Activated T-helper 1 cell treated with anti-CD3 and anti-CD28 coated beads, Interleukin-12 subunit alpha, Interleukin-12 subunit beta, Interleukin-2, Interleukin-4 antibody, amounts not matched to agents 30 ng/mL and 10 ng/mL and 1 ng/mL, durations not matched to agents 14 hours and 24 hours and 36 hours (primary cell): ENCODE measurements at regions of chr1 and their contacts with region 1.

Region 1: DNA sequence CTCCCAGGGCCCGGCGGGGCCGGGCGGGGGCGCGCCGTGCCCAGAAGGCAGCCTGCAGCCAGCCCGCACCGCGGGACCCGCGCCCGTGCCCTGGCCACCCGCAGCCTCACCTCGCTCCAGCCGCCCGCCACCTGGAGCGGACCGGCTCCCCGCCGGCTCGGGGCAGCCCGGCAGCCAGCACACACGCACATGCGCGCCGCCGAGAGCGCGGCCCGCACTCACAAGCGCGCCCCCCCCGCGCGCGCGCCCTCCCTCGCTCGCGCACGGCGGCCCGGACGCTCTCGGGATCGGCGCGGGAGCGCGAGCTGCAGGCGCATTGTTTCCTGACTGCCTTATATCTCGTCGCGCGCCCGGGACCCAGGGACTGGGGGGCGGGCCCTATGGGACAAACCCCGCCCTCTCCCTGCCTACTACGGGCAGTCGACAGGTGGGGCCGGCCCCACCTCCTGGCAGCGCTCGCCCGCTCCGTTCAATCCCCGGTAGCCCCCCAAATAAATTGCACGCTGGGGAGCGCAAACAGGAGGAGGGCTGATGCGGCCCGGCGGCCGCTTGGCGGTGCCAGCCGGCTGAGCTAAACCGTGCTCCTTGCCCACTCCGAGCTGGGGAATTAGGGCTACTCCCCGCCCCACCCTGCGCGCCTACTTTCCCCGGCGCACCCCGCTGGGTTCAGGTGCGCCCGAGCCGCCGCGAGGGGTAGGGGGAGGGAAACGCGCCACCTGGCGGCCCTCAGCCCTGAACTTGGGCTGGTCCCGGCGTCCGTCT is at the start of gene MYCL:
- DNase-seq: peak; percentile 56
- H3K4me3 Mint-ChIP-seq: peak within 1 kb of the TSS; percentile 74
- H3K27ac Mint-ChIP-seq: no peak within 1 kb of the TSS
- H3K4me1 Mint-ChIP-seq: no peaks in the 10 kb centered on the region
- H3K27me3 Mint-ChIP-seq: peaks cover 73% of the 10 kb centered on the region
- total RNA-seq, gene MYCL: 0.56 and 0.62 TPM in 2 replicates

Region 2: DNA sequence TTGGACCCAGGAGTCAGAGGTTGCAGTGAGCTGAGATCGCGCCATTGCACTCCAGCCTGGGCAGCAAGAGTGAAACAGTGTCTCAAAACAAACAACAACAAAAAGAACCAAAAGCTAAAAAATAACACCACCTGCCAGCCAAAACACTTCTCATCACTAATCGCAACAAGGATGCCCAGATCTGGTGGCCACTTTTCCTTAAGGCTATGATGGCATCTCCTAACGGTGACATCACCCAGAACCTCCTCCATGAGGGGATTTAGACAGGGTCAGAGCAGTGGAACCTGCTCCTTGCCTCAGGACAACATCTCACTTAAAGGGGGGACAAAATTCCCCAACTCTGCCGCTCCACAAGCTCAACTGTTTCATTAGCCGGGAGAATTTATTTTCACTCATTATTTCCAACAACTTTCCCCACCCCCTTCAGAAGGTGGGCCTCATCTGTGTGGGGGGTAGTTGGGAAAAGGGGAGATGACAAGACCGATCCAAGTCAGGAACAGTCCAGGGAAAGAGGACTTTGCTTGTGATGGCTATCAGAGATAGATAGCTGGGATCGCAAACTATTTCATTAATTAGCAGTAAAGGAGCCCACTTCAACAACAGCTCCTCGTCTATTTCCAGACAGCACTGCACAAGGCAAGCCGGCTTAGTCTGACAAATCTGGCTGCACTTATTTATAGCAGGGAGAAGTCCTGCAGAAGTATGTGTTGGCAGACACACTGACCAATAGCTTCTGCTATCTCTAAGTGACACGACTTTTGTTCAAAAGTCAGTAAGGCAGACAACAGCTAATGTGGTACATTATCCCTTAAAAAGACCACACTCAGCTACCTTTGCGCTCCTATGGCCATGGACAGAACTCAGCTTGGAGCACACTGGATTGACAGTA is 327.9 kb before region 1 on chr1:
- intact Hi-C with region 1: no loop called
- DNase-seq: no peak
- H3K4me3 Mint-ChIP-seq: peak overlapping the region; percentile 93
- H3K27ac Mint-ChIP-seq: peak overlapping the region; percentile 76
- H3K4me1 Mint-ChIP-seq: peaks cover 53% of the 10 kb centered on the region
- H3K27me3 Mint-ChIP-seq: no peaks in the 10 kb centered on the region

Region 3: DNA sequence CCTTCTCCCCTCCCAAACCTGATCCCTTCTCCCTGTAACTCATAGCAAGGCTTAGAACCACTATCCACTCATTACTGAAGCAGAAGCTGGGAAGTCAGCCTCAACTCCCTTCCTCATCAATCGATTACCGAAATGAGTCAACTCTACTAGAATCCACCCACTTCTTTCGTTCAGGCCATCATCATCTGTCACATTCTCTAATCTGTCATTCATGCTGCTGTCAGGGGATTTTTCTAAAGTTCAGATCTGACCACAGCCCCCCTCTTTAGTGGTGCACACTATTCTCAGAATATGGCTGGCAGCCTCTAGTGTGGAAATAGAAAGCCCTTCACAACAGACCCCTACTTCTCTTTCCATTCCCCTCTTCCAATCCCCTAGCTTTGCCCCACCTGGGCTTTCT is 235.1 kb before region 1 on chr1:
- intact Hi-C with region 1: loop called (anchors 10 kb)
- DNase-seq: peak; percentile 46
- H3K4me3 Mint-ChIP-seq: peak overlapping the region; percentile 23
- H3K27ac Mint-ChIP-seq: peak overlapping the region; percentile 62
- H3K4me1 Mint-ChIP-seq: peaks cover 38% of the 10 kb centered on the region
- H3K27me3 Mint-ChIP-seq: peaks cover 9% of the 10 kb centered on the region

Region 4: GRCh38 chr1:39691262-39692151 is 210.4 kb before region 1 on chr1 and contains the start of gene HPCAL4:
- intact Hi-C with region 1: loop called (anchors 5 kb)
- DNase-seq: peak; percentile 88
- H3K4me3 Mint-ChIP-seq: peak within 1 kb of the TSS; percentile 83
- H3K27ac Mint-ChIP-seq: no peak within 1 kb of the TSS
- H3K4me1 Mint-ChIP-seq: peaks cover 44% of the 10 kb centered on the region
- H3K27me3 Mint-ChIP-seq: peaks cover 33% of the 10 kb centered on the region
- total RNA-seq, gene HPCAL4: 0.69 and 0.75 TPM in 2 replicates

Region 5: DNA sequence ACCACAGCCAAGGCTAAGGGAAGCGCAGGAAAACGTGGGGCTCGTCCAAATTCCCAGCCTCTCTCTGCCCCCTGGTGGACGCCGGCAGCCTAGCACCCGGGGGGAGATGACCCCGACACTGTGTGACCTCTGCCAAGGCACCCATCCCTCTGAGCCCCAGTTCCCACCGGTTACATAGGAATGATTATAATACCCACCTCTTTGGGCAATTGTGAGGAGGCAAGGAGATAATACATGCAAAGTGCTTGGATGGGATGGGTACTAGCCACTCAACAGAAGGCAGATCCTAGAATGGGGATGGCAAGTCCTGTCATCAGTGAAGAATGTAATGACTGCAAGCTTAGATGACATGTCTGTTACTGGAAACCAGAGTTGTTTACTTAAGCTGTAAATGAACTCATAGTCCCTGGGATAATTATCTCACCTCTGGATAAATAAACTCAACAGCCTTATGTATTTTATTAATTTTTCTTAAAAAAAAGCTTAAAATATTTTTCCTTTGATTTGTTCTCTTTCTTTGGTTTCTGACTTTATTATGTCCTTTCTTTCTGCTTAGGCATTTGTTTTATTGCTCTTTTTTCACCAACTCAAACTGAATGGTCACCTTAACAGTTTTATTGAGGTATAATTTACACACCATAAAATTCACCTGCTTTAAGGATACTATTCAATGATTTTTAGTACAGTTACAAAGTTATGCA is 102.0 kb before region 1 on chr1:
- intact Hi-C with region 1: loop called (anchors 5 kb)
- DNase-seq: peak; percentile 41
- H3K4me3 Mint-ChIP-seq: peak overlapping the region; percentile 60
- H3K27ac Mint-ChIP-seq: peak overlapping the region; percentile 80
- H3K4me1 Mint-ChIP-seq: peaks cover 12% of the 10 kb centered on the region
- H3K27me3 Mint-ChIP-seq: peaks cover 4% of the 10 kb centered on the region

Region 6: GRCh38 chr1:39816415-39817090 is 85.3 kb before region 1 on chr1:
- intact Hi-C with region 1: loop called (anchors 1 kb)
- DNase-seq: peak; percentile 56
- H3K4me3 Mint-ChIP-seq: peak overlapping the region; percentile 37
- H3K27ac Mint-ChIP-seq: no peak overlapping the region
- H3K4me1 Mint-ChIP-seq: peaks cover 15% of the 10 kb centered on the region
- H3K27me3 Mint-ChIP-seq: peaks cover 20% of the 10 kb centered on the region

Region 7: DNA sequence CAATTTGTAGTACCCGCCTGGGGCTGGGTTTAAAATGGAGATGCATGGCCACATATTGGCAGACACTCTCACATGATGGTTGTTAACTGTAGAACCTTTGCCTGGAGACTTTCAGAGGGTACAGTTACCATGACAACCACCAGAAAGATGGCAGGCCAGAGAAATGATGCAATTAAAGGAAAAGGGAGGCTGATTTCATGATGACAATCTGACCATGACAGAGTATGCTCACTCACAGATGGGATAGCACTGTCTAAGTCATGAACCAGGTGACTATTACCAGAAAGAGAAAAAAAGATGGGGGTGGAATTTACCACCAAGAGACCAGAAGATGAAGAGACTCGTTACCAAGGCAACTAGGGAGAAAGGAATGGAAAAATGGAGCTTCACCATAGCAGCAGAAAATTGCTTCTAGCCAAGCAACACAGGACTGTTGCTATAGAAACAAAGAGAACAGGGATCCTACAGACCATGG is 15.1 kb before region 1 on chr1:
- intact Hi-C with region 1: loop called (anchors 1 kb)
- DNase-seq: no peak
- H3K4me3 Mint-ChIP-seq: no peak overlapping the region
- H3K27ac Mint-ChIP-seq: no peak overlapping the region
- H3K4me1 Mint-ChIP-seq: peaks cover 11% of the 10 kb centered on the region
- H3K27me3 Mint-ChIP-seq: peaks cover 15% of the 10 kb centered on the region

Region 8: GRCh38 chr1:39933956-39934941 is 32.4 kb after region 1 on chr1:
- intact Hi-C with region 1: no loop called
- DNase-seq: no peak
- H3K4me3 Mint-ChIP-seq: no peak overlapping the region
- H3K27ac Mint-ChIP-seq: no peak overlapping the region
- H3K4me1 Mint-ChIP-seq: peaks cover 8% of the 10 kb centered on the region
- H3K27me3 Mint-ChIP-seq: peaks cover 3% of the 10 kb centered on the region

Region 9: DNA sequence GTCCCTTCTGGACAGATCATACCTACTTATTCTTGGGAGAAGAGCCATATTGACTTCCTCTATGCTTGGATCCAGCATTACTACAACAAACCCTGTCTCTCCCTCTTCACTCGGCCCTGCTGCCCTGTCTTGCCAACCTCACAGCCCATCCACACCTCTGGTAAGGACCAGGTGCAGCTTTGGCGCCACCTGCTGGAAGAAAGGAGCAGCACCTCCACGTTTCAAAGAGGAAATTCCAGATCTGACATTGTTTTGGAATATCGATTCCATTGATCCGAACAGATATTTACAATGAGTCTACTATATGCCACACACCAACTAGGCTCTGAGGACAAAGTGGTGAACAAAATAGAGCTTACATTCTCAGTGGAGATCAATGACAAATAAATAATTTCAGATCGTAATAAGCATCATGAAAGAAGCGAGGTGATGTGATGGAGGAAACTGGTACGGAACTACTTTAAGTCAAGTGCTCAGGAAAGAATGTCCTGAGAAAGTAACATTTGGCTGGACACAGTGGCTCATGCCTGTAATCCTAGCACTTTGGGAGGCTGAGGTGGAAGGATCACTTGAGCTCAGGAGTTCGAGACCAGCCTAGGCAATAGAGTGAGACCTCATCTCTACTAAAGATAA is 71.7 kb after region 1 on chr1:
- intact Hi-C with region 1: loop called (anchors 1 kb)
- DNase-seq: peak; percentile 55
- H3K4me3 Mint-ChIP-seq: no peak overlapping the region
- H3K27ac Mint-ChIP-seq: no peak overlapping the region
- H3K4me1 Mint-ChIP-seq: peaks cover 6% of the 10 kb centered on the region
- H3K27me3 Mint-ChIP-seq: peaks cover 2% of the 10 kb centered on the region